PC-3 (cell line): ENCODE measurements at regions of chr3 and their contacts with region 1.

Region 1: DNA sequence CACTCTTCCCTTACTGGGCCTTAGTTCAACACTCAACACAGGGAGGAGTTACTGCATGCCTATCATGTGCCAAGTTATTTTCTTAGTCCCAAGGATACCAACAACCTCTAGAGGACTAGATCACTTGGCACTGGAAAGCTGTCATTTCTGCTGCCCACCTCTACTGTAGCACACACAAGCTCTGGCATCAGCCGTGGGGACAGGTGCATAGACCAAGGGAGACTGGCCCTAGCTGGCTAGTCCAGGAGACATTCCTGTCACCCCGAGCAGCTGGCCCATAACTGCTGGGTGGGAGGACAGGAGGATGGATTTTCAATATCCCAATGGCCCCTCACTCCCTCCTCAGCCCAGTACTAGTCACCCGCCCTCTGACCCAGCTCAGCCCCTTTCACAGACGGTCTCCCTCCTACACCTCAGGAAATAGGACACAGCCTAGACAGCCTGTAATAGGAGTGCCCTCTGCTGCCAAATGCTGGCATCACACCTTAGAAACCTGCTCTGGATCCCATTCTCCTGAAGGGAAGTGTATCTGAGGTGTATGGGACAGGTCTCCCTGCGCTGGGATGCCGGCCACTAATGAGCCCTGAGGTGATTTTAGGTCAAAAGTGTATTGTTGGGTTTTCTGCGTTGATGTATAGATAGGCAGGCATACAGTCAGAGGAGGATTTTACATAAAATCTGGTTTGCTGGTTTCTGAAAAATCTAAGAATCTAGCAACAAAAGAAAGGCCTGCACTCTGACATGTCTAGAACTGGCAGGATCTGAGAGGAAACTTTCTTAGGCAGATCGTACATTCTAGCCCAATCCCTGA is 3.4 kb upstream of the DZIP1L start:
- DNase-seq: peak; percentile 84
- ATAC-seq: peak; percentile 59
- H3K4me3 ChIP-seq: no peak overlapping the region
- H3K27ac ChIP-seq: no peak overlapping the region
- H3K4me1 ChIP-seq: peaks cover 7% of the 10 kb centered on the region
- H3K27me3 ChIP-seq: no peaks in the 10 kb centered on the region
- CTCF ChIP-seq: peak; percentile 81

Region 2: GRCh38 chr3:138057384-138057783 is 61.4 kb before region 1 on chr3:
- CTCF ChIA-PET with region 1: no interaction called
- POLR2A ChIA-PET with region 1: no interaction called
- intact Hi-C with region 1: no loop called
- DNase-seq: no peak
- ATAC-seq: no peak
- H3K4me3 ChIP-seq: no peak overlapping the region
- H3K27ac ChIP-seq: no peak overlapping the region
- H3K4me1 ChIP-seq: no peaks in the 10 kb centered on the region
- H3K27me3 ChIP-seq: no peaks in the 10 kb centered on the region
- CTCF ChIP-seq: no peak

Region 3: DNA sequence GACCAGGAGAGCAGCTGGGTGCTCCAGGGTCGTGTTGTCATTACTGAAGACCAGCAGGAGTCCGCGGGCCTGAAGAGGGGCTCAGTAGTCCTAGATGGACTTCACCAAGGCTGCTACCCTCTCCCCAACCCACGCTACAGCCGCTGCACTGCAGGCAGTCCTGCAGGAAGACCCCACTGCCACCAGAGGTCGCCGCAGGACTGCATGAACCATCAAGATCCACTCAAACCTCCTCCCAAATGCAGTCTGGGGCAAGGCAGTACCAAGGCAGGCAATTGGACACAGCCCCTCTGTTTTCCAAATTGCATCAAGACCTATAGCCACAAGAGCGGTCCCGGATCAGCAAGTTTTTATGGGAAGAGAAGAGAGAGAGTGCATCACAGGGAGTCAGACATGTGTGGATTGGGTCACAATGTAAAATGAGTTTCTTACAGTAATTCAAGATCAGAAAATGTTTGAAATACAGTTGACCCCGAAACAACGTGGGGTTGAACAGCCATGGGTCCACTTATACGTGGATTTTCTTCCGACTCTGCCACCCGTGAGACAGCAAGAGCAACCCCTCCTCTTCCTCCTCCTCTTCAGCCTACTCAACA is 50.1 kb before region 1 on chr3:
- CTCF ChIA-PET with region 1: interaction called, 4 read pairs
- POLR2A ChIA-PET with region 1: no interaction called
- intact Hi-C with region 1: loop called (anchors 1 kb)
- DNase-seq: peak; percentile 72
- ATAC-seq: peak; percentile 99
- H3K4me3 ChIP-seq: no peak overlapping the region
- H3K27ac ChIP-seq: no peak overlapping the region
- H3K4me1 ChIP-seq: no peaks in the 10 kb centered on the region
- H3K27me3 ChIP-seq: no peaks in the 10 kb centered on the region
- CTCF ChIP-seq: peak; percentile 92

Region 4: DNA sequence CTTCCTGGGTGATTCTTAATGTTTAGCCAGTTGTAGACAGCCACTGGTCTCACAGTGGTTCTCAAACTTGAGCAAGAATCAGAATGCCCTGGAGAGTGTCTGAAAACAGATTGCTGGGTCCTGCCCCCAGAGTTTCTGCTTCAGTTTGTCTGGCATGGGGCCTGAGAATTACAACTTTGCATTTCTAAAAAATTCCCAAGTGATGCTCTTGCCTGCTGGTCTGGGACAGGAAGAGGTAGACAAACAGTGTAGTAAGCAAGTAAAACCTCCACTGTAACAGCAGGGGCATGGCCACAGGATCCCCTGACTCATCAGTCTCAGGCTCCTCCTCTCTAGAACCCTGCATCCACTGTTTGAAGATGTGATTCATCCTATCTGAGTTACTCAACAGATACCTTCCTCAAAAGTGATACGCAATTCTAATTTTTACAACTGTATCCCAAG is 39.9 kb before region 1 on chr3:
- CTCF ChIA-PET with region 1: interaction called, 3 read pairs
- POLR2A ChIA-PET with region 1: no interaction called
- intact Hi-C with region 1: loop called (anchors 2 kb)
- DNase-seq: peak; percentile 88
- ATAC-seq: peak; percentile 78
- H3K4me3 ChIP-seq: no peak overlapping the region
- H3K27ac ChIP-seq: peak overlapping the region; percentile 99
- H3K4me1 ChIP-seq: peaks cover 63% of the 10 kb centered on the region
- H3K27me3 ChIP-seq: no peaks in the 10 kb centered on the region
- CTCF ChIP-seq: no peak